ENCODE measurements at regions of chr1 and their contacts with region 1.

Region 1: DNA sequence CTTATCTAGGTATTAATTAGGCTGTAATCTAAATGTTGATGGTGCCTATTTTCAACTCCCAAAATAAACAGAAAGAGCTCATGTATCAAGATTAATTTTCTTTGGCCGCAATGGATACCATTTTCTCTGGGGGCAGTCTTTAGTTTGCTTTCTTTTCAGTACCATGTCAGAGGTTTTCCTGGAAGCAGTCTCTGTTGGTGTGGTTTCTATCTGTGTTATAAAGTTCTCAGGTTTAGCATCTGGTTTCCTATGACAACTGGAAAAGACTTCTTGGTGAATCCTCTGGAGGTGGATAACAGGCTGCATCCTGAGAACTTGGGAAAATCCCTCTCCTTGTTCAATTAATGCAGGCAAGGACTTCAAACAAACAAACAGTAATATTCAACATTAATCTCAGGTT is 38.7 kb upstream of the BATF3 start:
- DNase-seq: no peak
- H3K4me3 ChIP-seq: no peak overlapping the region
- H3K4me3 Mint-ChIP-seq: no peak overlapping the region
- H3K27ac ChIP-seq: no peak overlapping the region
- H3K27ac Mint-ChIP-seq: peak overlapping the region in 1 of 8 donors; percentile 35
- H3K4me1 ChIP-seq: no peaks in the 10 kb centered on the region
- H3K4me1 Mint-ChIP-seq: peaks cover 5 to 9% (median 6%) of the 10 kb centered on the region in 3 donors
- H3K27me3 ChIP-seq: no peaks in the 10 kb centered on the region
- H3K27me3 Mint-ChIP-seq: no peaks in the 10 kb centered on the region

Region 2: DNA sequence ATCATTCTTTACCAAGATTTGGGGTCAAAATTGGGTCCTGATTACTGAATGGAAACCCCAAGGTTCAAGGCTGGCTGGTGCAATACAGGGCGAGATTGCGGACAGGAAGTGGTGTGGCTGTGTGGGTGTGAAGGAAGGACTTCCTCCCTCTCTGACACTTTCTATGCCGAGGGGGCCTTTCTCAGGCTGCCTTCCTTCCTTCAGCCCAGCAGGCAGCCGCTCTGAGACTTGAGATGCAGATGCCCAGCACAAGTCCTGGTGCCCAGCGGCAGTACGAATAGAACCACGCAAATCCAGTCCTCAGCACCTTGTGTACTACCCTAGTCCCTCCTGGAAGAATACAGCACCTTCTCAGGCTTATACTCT is 55.0 kb before region 1 on chr1:
- CTCF ChIA-PET with region 1: no interaction called
- POLR2A ChIA-PET with region 1: no interaction called
- DNase-seq: peak in 3 of 5 donors; percentile 18 to 58 (median 23)
- H3K4me3 ChIP-seq: no peak overlapping the region
- H3K4me3 Mint-ChIP-seq: peak overlapping the region; percentile 5 to 86 (median 67)
- H3K27ac ChIP-seq: no peak overlapping the region
- H3K27ac Mint-ChIP-seq: peak overlapping the region in 4 of 8 donors; percentile 15 to 90 (median 34)
- H3K4me1 ChIP-seq: peaks cover 14% of the 10 kb centered on the region
- H3K4me1 Mint-ChIP-seq: peaks cover 24 to 53% (median 35%) of the 10 kb centered on the region in 3 donors
- H3K27me3 ChIP-seq: no peaks in the 10 kb centered on the region
- H3K27me3 Mint-ChIP-seq: peaks cover 0 to 10% of the 10 kb centered on the region in 2 donors

Region 3: DNA sequence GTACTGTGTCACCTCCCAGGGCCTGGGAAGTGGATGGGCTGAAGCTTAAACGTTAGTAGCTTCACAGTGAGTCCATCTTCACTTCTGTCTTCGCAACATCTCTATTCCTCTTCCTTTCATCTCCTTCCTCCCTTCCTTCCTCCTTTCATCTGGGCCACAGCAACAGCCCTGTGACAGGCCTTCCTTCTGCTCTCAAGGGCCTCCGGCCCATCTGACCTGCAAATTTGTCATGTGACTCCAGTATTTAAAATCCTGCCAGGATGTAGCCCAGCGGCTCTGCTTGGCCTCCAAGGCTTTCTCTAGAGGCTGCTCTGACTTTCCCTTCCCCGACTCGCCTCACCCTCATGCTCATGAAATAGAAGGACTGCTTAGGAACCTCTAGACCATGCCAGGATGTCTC is 27.8 kb before region 1 on chr1:
- CTCF ChIA-PET with region 1: no interaction called
- POLR2A ChIA-PET with region 1: no interaction called
- DNase-seq: no peak
- H3K4me3 ChIP-seq: no peak overlapping the region
- H3K4me3 Mint-ChIP-seq: no peak overlapping the region
- H3K27ac ChIP-seq: no peak overlapping the region
- H3K27ac Mint-ChIP-seq: no peak overlapping the region
- H3K4me1 ChIP-seq: no peaks in the 10 kb centered on the region
- H3K4me1 Mint-ChIP-seq: no peaks in the 10 kb centered on the region
- H3K27me3 ChIP-seq: no peaks in the 10 kb centered on the region
- H3K27me3 Mint-ChIP-seq: no peaks in the 10 kb centered on the region

Region 4: DNA sequence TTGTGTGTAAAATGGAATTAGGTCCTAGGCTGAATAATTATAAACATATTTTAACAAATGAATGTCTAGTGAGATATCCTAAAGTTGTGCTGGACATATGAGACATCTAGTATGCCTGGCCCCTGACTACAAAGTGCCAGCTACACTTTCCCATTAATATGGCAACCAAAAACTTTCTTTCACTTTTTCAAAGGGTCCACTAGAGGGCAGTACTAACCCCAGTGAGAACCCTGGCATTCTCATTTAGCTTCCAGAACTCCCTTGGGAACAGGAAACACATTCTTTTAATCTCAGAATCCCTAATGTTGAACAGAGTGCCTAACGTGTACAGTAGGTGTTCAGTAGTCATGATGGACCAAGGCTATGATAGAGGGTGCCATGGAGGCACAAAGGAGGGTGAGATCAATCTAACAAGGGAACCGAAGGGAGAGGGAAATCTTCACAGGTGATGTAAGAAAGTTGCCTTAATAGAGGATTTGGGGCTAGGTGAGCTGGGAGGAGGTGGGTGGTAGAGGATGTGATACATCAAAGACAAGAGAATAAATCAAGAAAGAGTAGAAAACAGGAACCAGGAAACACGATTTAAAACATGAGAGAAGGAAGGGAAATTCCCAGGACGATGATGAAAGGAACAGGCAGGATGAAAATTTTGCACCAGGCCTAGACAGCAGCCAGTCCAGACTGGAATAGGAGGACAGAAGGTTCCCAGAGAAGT is 11.6 kb after region 1 on chr1:
- CTCF ChIA-PET with region 1: interaction called, 13 read pairs
- POLR2A ChIA-PET with region 1: no interaction called
- DNase-seq: peak in 1 of 5 donors; percentile 24
- H3K4me3 ChIP-seq: no peak overlapping the region
- H3K4me3 Mint-ChIP-seq: peak overlapping the region in 2 of 7 donors; percentile 6 to 23
- H3K27ac ChIP-seq: no peak overlapping the region
- H3K27ac Mint-ChIP-seq: peak overlapping the region in 6 of 8 donors; percentile 0 to 85 (median 45)
- H3K4me1 ChIP-seq: peaks cover 44% of the 10 kb centered on the region
- H3K4me1 Mint-ChIP-seq: peaks cover 28 to 44% (median 37%) of the 10 kb centered on the region in 3 donors
- H3K27me3 ChIP-seq: no peaks in the 10 kb centered on the region
- H3K27me3 Mint-ChIP-seq: no peaks in the 10 kb centered on the region

Region 5: DNA sequence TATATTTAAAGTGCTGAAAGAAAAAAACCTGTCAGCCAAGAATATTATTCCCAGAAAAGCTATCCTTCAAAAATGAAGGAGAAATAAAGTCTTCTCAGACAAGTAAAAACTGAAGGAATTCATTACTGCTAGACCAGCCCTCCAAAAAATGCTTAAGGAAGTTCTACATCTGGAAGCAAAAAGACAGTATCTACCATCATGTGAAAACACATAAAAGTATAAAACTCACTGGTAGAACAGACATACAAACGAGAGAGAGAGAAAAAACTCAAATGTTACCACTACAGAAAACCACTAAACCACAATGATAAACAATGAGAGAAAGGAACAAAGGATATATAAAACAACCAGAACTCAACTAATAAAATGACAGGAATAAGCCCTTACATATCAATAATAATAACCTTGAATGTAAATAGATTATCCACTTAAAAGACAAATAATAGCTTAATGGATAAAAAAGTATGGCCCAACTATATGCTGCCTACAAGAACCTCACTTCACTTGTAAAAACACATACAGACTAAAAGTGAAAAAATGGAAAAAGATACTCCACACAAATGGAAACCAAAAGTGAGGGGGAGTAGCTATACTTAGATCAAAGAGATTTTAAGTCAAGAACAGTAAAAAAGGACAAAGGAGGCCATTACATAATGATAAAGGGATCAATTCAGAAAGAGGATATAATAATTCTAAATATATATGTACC is 31.3 kb after region 1 on chr1:
- CTCF ChIA-PET with region 1: no interaction called
- POLR2A ChIA-PET with region 1: no interaction called
- DNase-seq: no peak
- H3K4me3 ChIP-seq: no peak overlapping the region
- H3K4me3 Mint-ChIP-seq: no peak overlapping the region
- H3K27ac ChIP-seq: no peak overlapping the region
- H3K27ac Mint-ChIP-seq: peak overlapping the region in 6 of 8 donors; percentile 13 to 71 (median 41)
- H3K4me1 ChIP-seq: no peaks in the 10 kb centered on the region
- H3K4me1 Mint-ChIP-seq: peaks cover 29 to 71% (median 53%) of the 10 kb centered on the region in 3 donors
- H3K27me3 ChIP-seq: no peaks in the 10 kb centered on the region
- H3K27me3 Mint-ChIP-seq: peaks cover 0 to 2% of the 10 kb centered on the region in 2 donors

Region 6: GRCh38 chr1:212791676-212792395 is 53.5 kb after region 1 on chr1 and contains the starts of genes NSL1 and TATDN3:
- CTCF ChIA-PET with region 1: no interaction called
- POLR2A ChIA-PET with region 1: no interaction called
- DNase-seq: peak; percentile 88 to 93 (median 90)
- H3K4me3 ChIP-seq: peak within 1 kb of the TSS; percentile 99
- H3K4me3 Mint-ChIP-seq: peak within 1 kb of the TSS; percentile 91 to 99 (median 97)
- H3K27ac ChIP-seq: peak within 1 kb of the TSS; percentile 95
- H3K27ac Mint-ChIP-seq: peak within 1 kb of the TSS; percentile 90 to 100 (median 94)
- H3K4me1 ChIP-seq: peaks cover 29% of the 10 kb centered on the region
- H3K4me1 Mint-ChIP-seq: peaks cover 36 to 64% (median 62%) of the 10 kb centered on the region in 3 donors
- H3K27me3 ChIP-seq: no peaks in the 10 kb centered on the region
- H3K27me3 Mint-ChIP-seq: no peaks in the 10 kb centered on the region
- total RNA-seq, gene NSL1: 39.5 to 42.0 TPM
- total RNA-seq, gene TATDN3: 18.0 to 18.5 TPM